Mammary epithelial cell (primary cell): ENCODE measurements at regions of chr22 and their contacts with region 1.

Region 1: GRCh38 chr22:46914916-46915894 is 152.8 kb downstream of the TBC1D22A start:
- DNase-seq: no peak
- H3K4me3 ChIP-seq: no peak overlapping the region
- H3K27ac ChIP-seq: no peak overlapping the region
- H3K4me1 ChIP-seq: no peaks in the 10 kb centered on the region
- H3K27me3 ChIP-seq: no peaks in the 10 kb centered on the region
- CTCF ChIP-seq: no peak

Region 2: GRCh38 chr22:46947516-46948257 is 32.5 kb after region 1 on chr22:
- CTCF ChIA-PET with region 1: no interaction called
- dilution Hi-C with region 1: loop called (anchors 5 kb)
- in situ Hi-C with region 1: no loop called
- intact Hi-C with region 1: no loop called
- DNase-seq: no peak
- H3K4me3 ChIP-seq: no peak overlapping the region
- H3K27ac ChIP-seq: no peak overlapping the region
- H3K4me1 ChIP-seq: no peaks in the 10 kb centered on the region
- H3K27me3 ChIP-seq: no peaks in the 10 kb centered on the region
- CTCF ChIP-seq: no peak